Endothelial cell of umbilical vein (primary cell): ENCODE measurements at regions of chr4 and their contacts with region 1.

Region 1: GRCh38 chr4:180028682-180029081 is 2214.5 kb upstream of the TENM3 start:
- DNase-seq: no peak
- H3K4me3 ChIP-seq: no peak overlapping the region
- H3K27ac ChIP-seq: no peak overlapping the region
- H3K4me1 ChIP-seq: no peaks in the 10 kb centered on the region
- H3K27me3 ChIP-seq: no peaks in the 10 kb centered on the region
- CTCF ChIP-seq: no peak
- POLR2A ChIP-seq: no peak

Region 2: DNA sequence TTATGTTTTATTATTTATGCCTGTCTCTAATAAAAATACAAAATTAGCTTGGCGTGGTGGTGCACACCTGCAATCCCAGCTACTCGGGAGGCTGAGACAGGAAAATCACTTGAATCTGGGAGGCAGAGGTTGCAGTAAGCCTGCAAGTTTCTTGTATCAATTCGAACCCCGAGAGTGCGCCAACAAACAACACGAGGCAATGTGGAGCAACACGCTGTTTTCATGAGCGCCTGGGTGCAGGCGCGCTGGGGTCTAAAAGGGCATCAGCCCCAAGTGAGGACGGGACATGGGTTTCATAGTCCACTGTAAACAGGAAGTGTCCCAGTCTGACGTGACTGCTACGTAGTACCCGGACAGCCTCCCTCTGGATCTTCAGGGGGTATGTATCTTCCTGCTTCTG is 951.8 kb before region 1 on chr4:
- CTCF ChIA-PET with region 1: no interaction called
- POLR2A ChIA-PET with region 1: interaction called, 10 read pairs
- dilution Hi-C with region 1: no loop called
- intact Hi-C with region 1: no loop called
- DNase-seq: no peak
- H3K4me3 ChIP-seq: no peak overlapping the region
- H3K27ac ChIP-seq: no peak overlapping the region
- H3K4me1 ChIP-seq: no peaks in the 10 kb centered on the region
- H3K27me3 ChIP-seq: no peaks in the 10 kb centered on the region
- CTCF ChIP-seq: no peak
- POLR2A ChIP-seq: no peak